ENCODE measurements at regions of chr14 and their contacts with region 1.

Region 1: DNA sequence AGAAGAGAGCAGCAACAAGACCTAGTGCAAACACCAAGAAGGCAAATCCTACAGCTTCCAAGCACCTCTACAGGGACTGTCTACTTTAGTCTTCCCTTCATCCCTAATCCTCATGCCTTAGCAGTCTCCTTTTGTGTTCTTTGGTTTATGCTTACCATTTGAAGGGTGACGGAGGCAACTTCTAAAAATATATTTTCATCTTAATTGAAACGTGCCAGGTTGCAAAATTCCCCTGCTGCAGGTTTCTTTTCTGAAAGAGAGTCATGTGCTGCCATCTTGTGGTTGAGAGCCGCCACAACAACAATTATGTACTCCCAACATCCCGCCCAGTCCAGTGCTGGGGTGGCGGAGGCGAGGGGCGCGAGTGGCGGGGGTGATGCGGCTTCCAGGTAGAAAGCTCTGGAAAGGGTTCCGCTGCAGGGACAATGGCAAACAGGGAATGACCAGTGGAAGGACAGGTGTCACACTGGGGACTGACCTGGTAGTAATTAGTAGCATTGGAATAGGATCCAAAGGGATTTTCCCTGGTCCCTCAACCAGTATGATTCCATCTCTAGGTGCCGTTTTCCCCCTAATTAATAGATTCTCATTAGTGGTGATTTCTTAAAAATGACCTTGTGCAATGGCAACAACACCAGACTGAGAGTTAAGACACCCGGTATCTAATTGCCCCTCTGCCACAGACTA is 80.3 kb upstream of the GNG2 start:
- DNase-seq: peak; percentile 35
- H3K4me3 ChIP-seq: no peak overlapping the region
- H3K27ac ChIP-seq: no peak overlapping the region
- H3K4me1 ChIP-seq: peaks cover 7% of the 10 kb centered on the region
- H3K27me3 ChIP-seq: no peaks in the 10 kb centered on the region
- CTCF ChIP-seq: peak; percentile 67 to 76

Region 2: DNA sequence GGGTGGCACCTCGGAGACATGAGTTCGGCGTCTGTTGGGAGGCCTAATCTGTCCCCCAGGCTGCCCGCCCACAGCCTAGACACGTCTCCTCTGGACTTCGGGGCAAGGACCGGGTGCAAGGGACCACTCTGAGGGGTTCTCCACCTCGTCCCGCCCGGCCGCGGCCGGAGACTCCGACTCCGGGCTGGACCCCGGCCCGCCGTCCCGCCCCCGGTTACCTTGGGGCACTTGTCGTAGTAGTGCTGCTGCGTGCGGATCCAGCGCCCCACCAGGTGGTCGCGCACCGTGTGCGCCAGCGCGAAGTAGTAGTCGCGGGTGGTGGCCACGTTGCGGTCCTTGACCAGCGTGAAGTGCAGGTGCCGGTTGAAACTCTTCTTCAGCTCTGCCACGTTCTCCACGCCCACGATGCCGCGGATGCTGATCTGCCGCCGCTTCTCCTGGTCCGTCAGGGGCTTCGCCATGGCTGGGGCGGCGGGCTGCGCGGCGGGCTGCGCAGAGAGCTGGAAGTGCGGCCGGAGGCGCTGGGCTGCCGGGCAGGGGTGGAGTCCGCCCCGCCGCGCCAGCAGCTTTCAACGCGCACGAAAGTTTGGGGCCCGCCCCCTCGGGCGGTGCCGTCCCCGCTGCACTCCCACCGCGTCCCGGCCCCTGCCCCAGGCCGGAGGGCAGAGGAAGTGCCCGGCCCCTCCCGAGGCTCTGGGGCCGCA is 836.1 kb before region 1 on chr14 and contains the start of gene PYGL:
- CTCF ChIA-PET with region 1: no interaction called
- dilution Hi-C with region 1: no loop called
- in situ Hi-C with region 1: loop called in 1 of 2 experiments (anchors 25 kb)
- intact Hi-C with region 1: no loop called
- DNase-seq: peak; percentile 75
- H3K4me3 ChIP-seq: peak within 1 kb of the TSS; percentile 84 to 98 (median 87)
- H3K27ac ChIP-seq: peak within 1 kb of the TSS; percentile 82
- H3K4me1 ChIP-seq: peaks cover 23% of the 10 kb centered on the region
- H3K27me3 ChIP-seq: no peaks in the 10 kb centered on the region
- CTCF ChIP-seq: no peak
- total RNA-seq, gene PYGL: 102 to 146 TPM

Region 3: DNA sequence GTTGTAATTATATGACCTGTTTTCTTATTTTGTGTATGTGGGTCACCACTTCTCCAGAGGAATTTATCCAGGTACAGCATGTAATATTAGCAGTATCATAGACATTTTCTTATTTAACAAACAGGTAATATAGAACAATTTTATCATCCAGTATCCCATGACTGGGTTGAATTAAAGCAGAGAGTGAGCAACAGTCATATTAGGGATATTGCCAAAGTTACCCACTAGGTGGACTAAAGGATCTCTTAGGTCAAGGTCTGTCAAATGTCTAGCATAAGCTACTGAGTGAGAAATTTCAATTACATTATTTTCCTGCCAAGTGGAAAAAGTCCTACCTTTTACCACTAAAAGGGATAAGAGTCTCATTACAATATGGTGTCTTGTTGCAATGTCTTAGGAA is 623.1 kb before region 1 on chr14:
- CTCF ChIA-PET with region 1: no interaction called
- dilution Hi-C with region 1: no loop called
- in situ Hi-C with region 1: no loop called
- intact Hi-C with region 1: loop called (anchors 1 kb)
- DNase-seq: peak; percentile 27
- H3K4me3 ChIP-seq: no peak overlapping the region
- H3K27ac ChIP-seq: no peak overlapping the region
- H3K4me1 ChIP-seq: no peaks in the 10 kb centered on the region
- H3K27me3 ChIP-seq: no peaks in the 10 kb centered on the region
- CTCF ChIP-seq: peak; percentile 37 to 55

Region 4: GRCh38 chr14:51490205-51490604 is 289.9 kb before region 1 on chr14:
- CTCF ChIA-PET with region 1: no interaction called
- dilution Hi-C with region 1: no loop called
- in situ Hi-C with region 1: no loop called
- intact Hi-C with region 1: loop called (anchors 1 kb)
- DNase-seq: peak; percentile 67
- H3K4me3 ChIP-seq: peak overlapping the region; percentile 55 to 97 (median 85)
- H3K27ac ChIP-seq: peak overlapping the region; percentile 99
- H3K4me1 ChIP-seq: peaks cover 31% of the 10 kb centered on the region
- H3K27me3 ChIP-seq: no peaks in the 10 kb centered on the region
- CTCF ChIP-seq: no peak

Region 5: GRCh38 chr14:51576117-51576430 is 204.1 kb before region 1 on chr14:
- CTCF ChIA-PET with region 1: no interaction called
- dilution Hi-C with region 1: no loop called
- in situ Hi-C with region 1: no loop called
- intact Hi-C with region 1: loop called (anchors 2 kb)
- DNase-seq: no peak
- H3K4me3 ChIP-seq: no peak overlapping the region
- H3K27ac ChIP-seq: no peak overlapping the region
- H3K4me1 ChIP-seq: peaks cover 21% of the 10 kb centered on the region
- H3K27me3 ChIP-seq: no peaks in the 10 kb centered on the region
- CTCF ChIP-seq: no peak

Region 6: DNA sequence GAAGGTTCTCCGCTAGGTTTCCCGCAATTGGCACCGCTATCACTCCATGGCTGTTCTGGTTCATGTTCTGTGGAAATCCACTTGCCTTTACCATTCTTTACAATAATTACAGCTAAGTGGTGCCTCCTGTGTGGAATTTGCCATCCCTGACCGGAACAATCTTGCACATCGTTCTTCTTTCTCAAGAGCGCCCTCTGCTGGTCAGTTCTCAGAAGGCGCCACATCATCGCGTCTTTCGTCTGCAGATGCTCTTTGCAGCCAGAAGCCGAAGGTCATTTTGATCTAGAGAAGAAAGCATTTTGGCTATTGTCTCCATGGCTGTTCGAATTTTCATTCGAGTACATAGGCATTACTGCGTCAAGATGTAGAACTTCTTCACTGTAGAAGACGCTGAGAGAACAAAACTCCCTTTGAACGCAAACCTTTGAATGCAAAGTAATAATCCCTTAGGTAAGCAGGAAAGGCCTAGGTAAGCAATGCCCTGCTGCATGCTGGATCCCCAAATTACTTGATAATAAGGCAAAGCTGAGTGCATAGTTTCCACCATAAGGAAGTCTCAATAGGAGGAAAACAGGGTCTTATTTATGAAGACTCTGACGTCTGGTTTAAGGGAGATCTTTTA is 199.1 kb after region 1 on chr14:
- CTCF ChIA-PET with region 1: no interaction called
- dilution Hi-C with region 1: no loop called
- in situ Hi-C with region 1: loop called in 1 of 2 experiments (anchors 25 kb)
- intact Hi-C with region 1: loop called (anchors 1 kb)
- DNase-seq: peak; percentile 54
- H3K4me3 ChIP-seq: no peak overlapping the region
- H3K27ac ChIP-seq: no peak overlapping the region
- H3K4me1 ChIP-seq: no peaks in the 10 kb centered on the region
- H3K27me3 ChIP-seq: no peaks in the 10 kb centered on the region
- CTCF ChIP-seq: peak; percentile 88 to 92

Region 7: GRCh38 chr14:52131640-52132320 is 351.6 kb after region 1 on chr14:
- CTCF ChIA-PET with region 1: no interaction called
- dilution Hi-C with region 1: no loop called
- in situ Hi-C with region 1: no loop called
- intact Hi-C with region 1: loop called (anchors 2 kb)
- DNase-seq: peak; percentile 79
- H3K4me3 ChIP-seq: no peak overlapping the region
- H3K27ac ChIP-seq: no peak overlapping the region
- H3K4me1 ChIP-seq: peaks cover 5% of the 10 kb centered on the region
- H3K27me3 ChIP-seq: no peaks in the 10 kb centered on the region
- CTCF ChIP-seq: peak; percentile 66 to 84